Sigmoid colon (tissue), 7 donors: ENCODE measurements at regions of chr4 and their contacts with region 1.

Region 1: DNA sequence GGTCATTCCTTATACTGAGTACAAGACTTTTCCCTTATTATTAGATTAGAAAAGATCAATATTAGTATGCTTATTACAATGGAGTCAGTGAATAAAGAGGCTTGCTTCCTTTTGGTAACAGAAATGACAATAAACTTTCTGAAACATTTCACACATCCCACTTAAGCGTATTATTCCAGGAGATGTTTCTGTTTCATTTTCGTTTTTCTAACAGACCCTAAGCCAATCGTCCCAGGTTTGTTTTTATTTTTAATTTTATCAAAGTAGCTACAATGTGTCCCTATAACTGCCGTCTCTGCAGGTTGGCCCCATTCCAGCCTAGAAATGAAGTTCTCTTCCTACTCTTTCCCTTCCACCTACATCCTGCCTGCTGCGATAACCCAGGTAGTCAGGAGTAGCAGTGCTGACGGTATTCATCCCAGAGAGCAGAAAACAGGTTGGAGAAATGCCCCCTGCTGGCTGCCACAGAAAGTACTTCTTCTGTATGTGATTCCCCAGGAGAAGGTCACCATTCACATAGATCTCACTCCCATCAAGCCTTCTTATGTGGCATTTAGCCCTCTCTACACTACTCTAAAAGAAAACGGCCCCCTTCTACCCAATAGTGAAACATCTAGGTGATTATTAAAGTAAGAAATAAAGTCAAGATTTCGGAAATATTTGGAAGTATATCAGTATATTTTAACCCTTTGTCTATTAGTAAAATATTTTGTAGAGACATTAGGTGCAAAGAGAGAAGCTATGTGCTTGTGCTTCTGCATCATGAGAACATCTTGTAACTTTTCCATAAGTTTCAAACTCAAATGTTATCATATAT is 40.4 kb downstream of the ENPEP start:
- DNase-seq: peak; percentile 87
- H3K4me3 ChIP-seq: peak overlapping the region; percentile 26 to 43 (median 36)
- H3K27ac ChIP-seq: peak overlapping the region in 1 of 4 donors; percentile 14
- H3K4me1 ChIP-seq: no peaks in the 10 kb centered on the region
- H3K27me3 ChIP-seq: no peaks in the 10 kb centered on the region
- CTCF ChIP-seq: peak in 3 of 4 experiments; percentile 50 to 65 (median 51)
- EP300 ChIP-seq: no peak
- POLR2A ChIP-seq: no peak

Region 2: DNA sequence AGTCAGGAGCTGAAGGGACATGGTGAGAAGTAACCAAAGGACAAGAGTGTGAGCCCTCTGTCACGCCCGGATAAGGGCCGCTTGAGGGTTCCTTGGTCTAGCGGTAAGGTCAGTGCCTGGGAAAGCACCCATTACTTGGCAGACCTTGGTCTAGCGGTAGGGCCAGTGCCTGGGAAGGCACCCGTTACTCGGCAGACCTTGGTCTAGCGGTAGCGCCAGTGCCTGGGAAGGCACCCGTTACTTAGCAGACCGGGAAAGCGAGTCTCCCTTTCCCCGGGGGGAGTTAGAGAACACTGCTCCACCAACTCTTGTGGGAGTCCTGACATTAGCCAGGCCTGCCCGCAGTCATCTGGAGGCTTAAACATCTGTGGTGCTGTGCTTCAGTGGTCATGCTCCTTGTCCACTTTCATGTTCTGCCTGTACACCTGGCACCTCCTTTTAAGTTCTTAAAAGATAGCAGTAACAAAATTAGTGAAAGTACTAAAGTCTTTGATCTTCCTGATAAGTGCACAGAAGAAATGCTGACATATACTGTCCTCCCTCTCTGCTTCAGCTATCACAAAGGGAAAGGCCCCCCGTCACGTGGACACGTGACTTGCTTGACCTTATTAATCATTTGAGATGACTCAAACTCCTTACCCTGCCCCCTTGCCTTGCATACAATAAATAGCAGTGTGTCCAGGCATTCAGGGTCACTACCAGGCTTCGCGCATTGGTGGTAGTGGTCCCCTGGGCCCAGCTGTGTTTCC is 1092.0 kb before region 1 on chr4:
- intact Hi-C with region 1: loop called (anchors 10 kb)
- DNase-seq: no peak
- H3K4me3 ChIP-seq: no peak overlapping the region
- H3K27ac ChIP-seq: no peak overlapping the region
- H3K4me1 ChIP-seq: peaks cover 0 to 6% (median 4%) of the 10 kb centered on the region in 4 donors
- H3K27me3 ChIP-seq: no peaks in the 10 kb centered on the region
- CTCF ChIP-seq: no peak
- EP300 ChIP-seq: no peak
- POLR2A ChIP-seq: no peak

Region 3: DNA sequence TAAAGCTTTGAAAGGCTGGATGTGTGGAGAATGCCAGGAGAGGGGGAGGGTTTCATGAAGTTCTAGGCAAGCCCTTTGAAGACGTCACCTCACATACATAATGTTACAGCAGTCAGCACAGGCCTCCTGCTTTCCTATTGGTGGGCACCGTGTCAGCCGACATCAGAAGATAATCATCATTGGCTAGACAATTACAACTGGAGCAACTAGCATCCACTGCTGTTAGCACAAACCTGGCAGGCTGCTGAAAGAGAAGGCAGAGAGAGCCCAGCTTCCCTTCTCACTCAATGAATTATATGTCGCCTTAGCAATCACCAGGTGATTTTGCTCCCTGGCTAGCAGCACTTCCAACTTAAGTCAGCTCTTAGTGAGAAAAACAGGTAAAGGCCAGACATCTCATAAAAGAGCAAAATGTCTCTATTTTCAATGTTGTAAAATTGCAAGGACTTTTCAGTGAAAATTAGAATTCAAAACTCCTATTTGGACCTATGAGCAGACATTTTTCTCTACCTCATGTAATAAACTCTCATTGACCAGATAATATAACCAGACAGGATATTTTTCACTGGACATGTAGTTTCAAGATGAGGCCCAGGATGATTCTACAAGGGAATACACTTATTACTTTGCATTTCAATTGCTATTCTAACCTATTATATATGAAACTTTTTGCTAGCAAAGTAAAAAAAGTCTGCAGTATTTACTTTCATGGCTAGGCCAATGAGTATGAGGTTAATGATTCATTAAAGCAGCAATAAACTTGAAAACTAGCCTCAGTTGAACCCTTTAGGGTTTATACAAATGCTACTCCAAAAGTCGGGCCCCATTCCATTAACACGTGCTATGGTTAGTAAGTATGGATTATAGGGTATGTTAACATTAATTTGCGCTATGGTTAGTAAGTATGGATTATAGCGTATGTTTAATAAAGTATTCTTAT is 322.2 kb before region 1 on chr4:
- intact Hi-C with region 1: loop called (anchors 10 kb)
- DNase-seq: peak; percentile 83
- H3K4me3 ChIP-seq: no peak overlapping the region
- H3K27ac ChIP-seq: peak overlapping the region in 3 of 4 donors; percentile 8 to 35 (median 26)
- H3K4me1 ChIP-seq: peaks cover 0 to 22% (median 14%) of the 10 kb centered on the region in 4 donors
- H3K27me3 ChIP-seq: no peaks in the 10 kb centered on the region
- CTCF ChIP-seq: no peak
- EP300 ChIP-seq: no peak
- POLR2A ChIP-seq: peak; percentile 14 to 52

Region 4: GRCh38 chr4:110310795-110311194 is 205.5 kb before region 1 on chr4:
- intact Hi-C with region 1: loop called (anchors 10 kb)
- DNase-seq: no peak
- H3K4me3 ChIP-seq: no peak overlapping the region
- H3K27ac ChIP-seq: no peak overlapping the region
- H3K4me1 ChIP-seq: no peaks in the 10 kb centered on the region
- H3K27me3 ChIP-seq: no peaks in the 10 kb centered on the region
- CTCF ChIP-seq: no peak
- EP300 ChIP-seq: no peak
- POLR2A ChIP-seq: no peak

Region 5: DNA sequence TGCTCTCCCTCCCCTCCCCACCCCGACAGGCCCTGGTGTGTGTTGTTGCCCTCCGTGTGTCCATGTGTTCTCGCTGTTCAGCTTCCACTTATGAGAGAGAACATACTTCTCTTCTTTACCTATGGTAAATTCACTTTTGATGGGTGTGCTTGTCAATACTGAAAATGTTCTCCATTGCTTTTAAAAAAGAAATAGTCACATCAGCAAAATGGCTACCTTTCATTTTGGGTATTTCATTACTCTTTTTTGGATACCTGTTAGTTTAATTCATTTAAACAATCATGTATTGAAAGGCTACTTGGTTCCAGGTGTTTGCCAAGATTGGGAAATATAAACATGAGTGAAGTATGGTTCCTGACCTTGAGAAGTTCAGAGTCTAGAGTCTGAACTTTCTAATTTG is 214.0 kb after region 1 on chr4:
- intact Hi-C with region 1: no loop called
- DNase-seq: no peak
- H3K4me3 ChIP-seq: no peak overlapping the region
- H3K27ac ChIP-seq: no peak overlapping the region
- H3K4me1 ChIP-seq: no peaks in the 10 kb centered on the region
- H3K27me3 ChIP-seq: no peaks in the 10 kb centered on the region
- CTCF ChIP-seq: no peak
- EP300 ChIP-seq: no peak
- POLR2A ChIP-seq: no peak

Region 6: GRCh38 chr4:110754726-110755125 is 238.4 kb after region 1 on chr4:
- intact Hi-C with region 1: no loop called
- DNase-seq: no peak
- H3K4me3 ChIP-seq: no peak overlapping the region
- H3K27ac ChIP-seq: no peak overlapping the region
- H3K4me1 ChIP-seq: no peaks in the 10 kb centered on the region
- H3K27me3 ChIP-seq: no peaks in the 10 kb centered on the region
- CTCF ChIP-seq: no peak
- EP300 ChIP-seq: no peak
- POLR2A ChIP-seq: no peak